ENCODE measurements at regions of chr4 and their contacts with region 1.

Region 1: DNA sequence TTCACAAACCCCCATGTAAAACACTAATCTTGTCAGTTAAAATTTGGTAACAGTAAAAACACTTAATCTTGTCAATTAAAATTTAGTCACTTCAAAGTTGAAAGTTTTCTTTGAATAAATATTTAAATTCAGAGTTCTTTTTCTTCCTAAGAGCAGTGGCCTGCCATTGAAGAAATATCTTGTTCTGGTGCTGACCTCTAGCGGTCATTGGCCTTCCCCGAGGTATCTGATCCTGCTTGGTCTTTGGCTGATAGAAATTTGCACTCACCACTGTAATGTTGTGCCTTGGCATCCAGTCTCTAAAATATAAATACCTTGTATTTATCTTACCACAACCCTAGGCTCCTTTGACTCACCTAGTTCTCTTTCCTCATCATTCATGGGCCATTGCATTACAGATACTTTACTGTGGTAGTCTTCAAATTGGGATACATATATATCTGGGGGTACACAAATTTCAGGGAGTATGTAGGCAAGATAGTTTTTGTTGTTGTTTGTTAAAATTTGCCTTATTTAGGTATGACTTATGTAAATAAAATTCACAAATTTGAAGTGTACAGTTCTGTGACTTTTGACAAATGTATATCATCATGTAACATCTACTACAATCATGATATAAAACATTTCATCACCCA is 6.7 kb upstream of the ART3 start:
- DNase-seq: peak; percentile 83
- ATAC-seq: peak; percentile 82
- H3K4me3 ChIP-seq: no peak overlapping the region
- H3K4me3 Mint-ChIP-seq: no peak overlapping the region
- H3K27ac ChIP-seq: no peak overlapping the region
- H3K27ac Mint-ChIP-seq: no peak overlapping the region
- H3K4me1 ChIP-seq: peaks cover under 1% of the 10 kb centered on the region in 2 donors
- H3K4me1 Mint-ChIP-seq: peaks cover 2% of the 10 kb centered on the region
- H3K27me3 ChIP-seq: no peaks in the 10 kb centered on the region
- H3K27me3 Mint-ChIP-seq: no peaks in the 10 kb centered on the region
- CTCF ChIP-seq: peak; percentile 94

Region 2: DNA sequence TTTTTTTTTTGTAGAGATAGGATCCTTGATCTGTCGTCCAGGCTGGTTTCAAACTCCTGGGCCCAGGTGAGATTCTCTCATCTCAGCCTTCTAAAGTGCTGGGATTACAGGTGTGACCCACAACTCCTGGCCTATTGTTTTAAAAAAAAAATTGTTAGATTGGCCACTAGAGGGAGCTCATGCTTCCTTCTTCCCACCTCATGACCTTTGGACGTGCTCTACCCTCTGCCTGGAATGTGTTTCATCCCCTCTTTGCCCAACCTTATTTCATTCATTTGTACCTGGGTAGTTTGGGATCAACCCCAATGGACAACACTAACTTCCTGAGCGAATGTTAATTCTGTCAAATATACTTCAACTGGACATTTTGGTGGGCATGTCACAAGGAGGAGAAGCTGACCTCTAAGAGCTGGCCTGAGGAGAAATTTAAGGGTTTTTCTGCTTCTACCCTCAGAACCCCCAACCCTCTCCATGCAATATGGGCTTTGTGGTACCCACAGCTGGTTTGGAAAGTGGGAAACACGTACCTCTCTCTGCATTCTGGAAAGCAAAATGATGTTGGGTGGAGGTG is 171.9 kb before region 1 on chr4:
- CTCF ChIA-PET with region 1: interaction called, 24 read pairs
- POLR2A ChIA-PET with region 1: no interaction called
- intact Hi-C with region 1: loop called (anchors 1 kb)
- DNase-seq: peak; percentile 73
- ATAC-seq: peak; percentile 68
- H3K4me3 ChIP-seq: no peak overlapping the region
- H3K4me3 Mint-ChIP-seq: no peak overlapping the region
- H3K27ac ChIP-seq: no peak overlapping the region
- H3K27ac Mint-ChIP-seq: no peak overlapping the region
- H3K4me1 ChIP-seq: no peaks in the 10 kb centered on the region
- H3K4me1 Mint-ChIP-seq: no peaks in the 10 kb centered on the region
- H3K27me3 ChIP-seq: no peaks in the 10 kb centered on the region
- H3K27me3 Mint-ChIP-seq: no peaks in the 10 kb centered on the region
- CTCF ChIP-seq: peak; percentile 80

Region 3: GRCh38 chr4:75916091-75916661 is 151.6 kb before region 1 on chr4:
- CTCF ChIA-PET with region 1: interaction called, 13 read pairs
- POLR2A ChIA-PET with region 1: no interaction called
- intact Hi-C with region 1: loop called (anchors 1 kb)
- DNase-seq: peak; percentile 48
- ATAC-seq: peak; percentile 79
- H3K4me3 ChIP-seq: no peak overlapping the region
- H3K4me3 Mint-ChIP-seq: no peak overlapping the region
- H3K27ac ChIP-seq: no peak overlapping the region
- H3K27ac Mint-ChIP-seq: no peak overlapping the region
- H3K4me1 ChIP-seq: no peaks in the 10 kb centered on the region
- H3K4me1 Mint-ChIP-seq: no peaks in the 10 kb centered on the region
- H3K27me3 ChIP-seq: no peaks in the 10 kb centered on the region
- H3K27me3 Mint-ChIP-seq: no peaks in the 10 kb centered on the region
- CTCF ChIP-seq: peak; percentile 79

Region 4: DNA sequence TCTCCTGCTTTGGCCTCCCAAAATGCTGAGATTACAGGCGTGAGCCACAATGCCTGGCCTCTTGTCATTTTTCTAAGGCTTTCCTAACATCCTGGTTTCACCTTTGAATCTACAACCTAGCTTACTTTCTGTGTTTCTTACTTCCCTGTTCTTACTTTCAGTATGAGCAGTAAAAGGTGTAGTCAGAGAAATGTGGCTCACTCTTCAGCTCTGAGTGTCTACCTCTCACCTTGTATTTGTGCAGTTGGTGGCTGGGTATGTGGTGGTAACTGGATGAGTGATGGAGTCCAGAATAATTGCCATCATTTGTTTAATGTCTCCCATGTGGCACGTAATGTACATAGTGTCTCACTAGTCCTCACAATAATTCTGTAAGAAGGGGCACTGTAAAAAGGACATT is 12.8 kb before region 1 on chr4:
- CTCF ChIA-PET with region 1: interaction called, 11 read pairs
- POLR2A ChIA-PET with region 1: no interaction called
- intact Hi-C with region 1: no loop called
- DNase-seq: peak; percentile 63
- ATAC-seq: peak; percentile 95
- H3K4me3 ChIP-seq: no peak overlapping the region
- H3K4me3 Mint-ChIP-seq: peak overlapping the region; percentile 55
- H3K27ac ChIP-seq: peak overlapping the region; percentile 39 to 69
- H3K27ac Mint-ChIP-seq: peak overlapping the region; percentile 86
- H3K4me1 ChIP-seq: peaks cover 17 to 20% of the 10 kb centered on the region in 2 donors
- H3K4me1 Mint-ChIP-seq: peaks cover 19% of the 10 kb centered on the region
- H3K27me3 ChIP-seq: no peaks in the 10 kb centered on the region
- H3K27me3 Mint-ChIP-seq: no peaks in the 10 kb centered on the region
- CTCF ChIP-seq: no peak

Region 5: GRCh38 chr4:76148142-76148865 is 80.5 kb after region 1 on chr4 and contains the start of gene NUP54:
- CTCF ChIA-PET with region 1: no interaction called
- POLR2A ChIA-PET with region 1: no interaction called
- intact Hi-C with region 1: loop called (anchors 2 kb)
- DNase-seq: peak; percentile 95
- ATAC-seq: peak; percentile 98
- H3K4me3 ChIP-seq: peak within 1 kb of the TSS; percentile 71 to 98 (median 97)
- H3K4me3 Mint-ChIP-seq: peak within 1 kb of the TSS; percentile 98
- H3K27ac ChIP-seq: peak within 1 kb of the TSS; percentile 77 to 91
- H3K27ac Mint-ChIP-seq: peak within 1 kb of the TSS; percentile 89
- H3K4me1 ChIP-seq: peaks cover 22 to 28% of the 10 kb centered on the region in 2 donors
- H3K4me1 Mint-ChIP-seq: peaks cover 35% of the 10 kb centered on the region
- H3K27me3 ChIP-seq: no peaks in the 10 kb centered on the region
- H3K27me3 Mint-ChIP-seq: no peaks in the 10 kb centered on the region
- CTCF ChIP-seq: no peak
- total RNA-seq, gene NUP54: 71.0 and 71.4 TPM in 2 replicates

Measured in B cell (primary cell).